ENCODE measurements at regions of chr17 and their contacts with region 1.

Region 1: DNA sequence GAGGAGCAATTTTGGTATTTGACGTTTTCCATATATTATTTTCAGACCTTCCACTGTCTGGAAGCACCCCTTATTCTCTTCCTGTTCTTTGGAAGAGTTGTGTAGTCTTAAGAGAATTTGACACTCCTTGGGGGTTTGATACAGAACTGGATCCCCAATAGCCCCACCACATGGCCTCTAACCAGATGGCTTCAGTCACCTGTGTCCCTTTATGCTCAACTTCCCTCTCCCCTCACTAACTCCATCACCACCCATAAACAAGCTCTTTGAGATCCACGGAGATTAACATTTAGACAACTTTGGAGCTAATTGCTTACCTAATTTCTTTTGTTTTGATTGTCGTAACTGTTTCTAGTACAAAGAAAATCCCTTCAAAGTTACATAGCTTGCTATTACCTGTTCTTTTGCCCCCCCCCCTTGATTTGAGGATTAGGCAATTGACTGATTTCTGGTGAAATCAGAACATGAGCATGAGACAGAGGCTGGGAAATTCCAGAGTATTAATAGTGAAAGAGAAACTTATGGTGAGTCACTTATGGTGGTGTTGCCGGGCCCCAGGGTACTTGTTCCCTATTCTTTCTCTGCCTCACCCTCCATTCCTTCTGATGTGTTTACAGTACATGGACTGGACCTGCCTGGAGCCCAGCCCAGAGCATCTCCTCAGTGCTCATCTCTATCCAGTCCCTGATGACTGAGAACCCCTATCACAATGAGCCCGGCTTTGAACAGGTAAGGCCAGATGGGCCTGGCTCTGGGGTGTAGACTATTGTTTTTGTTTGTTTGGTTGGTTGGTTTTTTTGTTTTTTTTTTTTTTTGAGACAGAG is 7.5 kb downstream of the UBE2Z start:
- DNase-seq: no peak
- H3K4me3 ChIP-seq: no peak overlapping the region
- H3K27ac ChIP-seq: peak overlapping the region; percentile 3 to 28
- H3K4me1 ChIP-seq: peaks cover 4 to 8% of the 10 kb centered on the region in 2 donors
- H3K27me3 ChIP-seq: no peaks in the 10 kb centered on the region
- CTCF ChIP-seq: no peak

Region 2: GRCh38 chr17:47990962-47991731 is 924.5 kb before region 1 on chr17:
- intact Hi-C with region 1: loop called (anchors 5 kb)
- DNase-seq: no peak
- H3K4me3 ChIP-seq: no peak overlapping the region
- H3K27ac ChIP-seq: no peak overlapping the region
- H3K4me1 ChIP-seq: peaks cover 0 to 3% of the 10 kb centered on the region in 2 donors
- H3K27me3 ChIP-seq: no peaks in the 10 kb centered on the region
- CTCF ChIP-seq: no peak

Region 3: GRCh38 chr17:48429638-48430586 is 485.8 kb before region 1 on chr17 and contains the start of gene SKAP1:
- intact Hi-C with region 1: no loop called
- DNase-seq: no peak
- H3K4me3 ChIP-seq: peak within 1 kb of the TSS; percentile 30 to 48
- H3K27ac ChIP-seq: no peak within 1 kb of the TSS
- H3K4me1 ChIP-seq: no peaks in the 10 kb centered on the region
- H3K27me3 ChIP-seq: no peaks in the 10 kb centered on the region
- CTCF ChIP-seq: no peak
- total RNA-seq, gene SKAP1: not detected

Region 4: DNA sequence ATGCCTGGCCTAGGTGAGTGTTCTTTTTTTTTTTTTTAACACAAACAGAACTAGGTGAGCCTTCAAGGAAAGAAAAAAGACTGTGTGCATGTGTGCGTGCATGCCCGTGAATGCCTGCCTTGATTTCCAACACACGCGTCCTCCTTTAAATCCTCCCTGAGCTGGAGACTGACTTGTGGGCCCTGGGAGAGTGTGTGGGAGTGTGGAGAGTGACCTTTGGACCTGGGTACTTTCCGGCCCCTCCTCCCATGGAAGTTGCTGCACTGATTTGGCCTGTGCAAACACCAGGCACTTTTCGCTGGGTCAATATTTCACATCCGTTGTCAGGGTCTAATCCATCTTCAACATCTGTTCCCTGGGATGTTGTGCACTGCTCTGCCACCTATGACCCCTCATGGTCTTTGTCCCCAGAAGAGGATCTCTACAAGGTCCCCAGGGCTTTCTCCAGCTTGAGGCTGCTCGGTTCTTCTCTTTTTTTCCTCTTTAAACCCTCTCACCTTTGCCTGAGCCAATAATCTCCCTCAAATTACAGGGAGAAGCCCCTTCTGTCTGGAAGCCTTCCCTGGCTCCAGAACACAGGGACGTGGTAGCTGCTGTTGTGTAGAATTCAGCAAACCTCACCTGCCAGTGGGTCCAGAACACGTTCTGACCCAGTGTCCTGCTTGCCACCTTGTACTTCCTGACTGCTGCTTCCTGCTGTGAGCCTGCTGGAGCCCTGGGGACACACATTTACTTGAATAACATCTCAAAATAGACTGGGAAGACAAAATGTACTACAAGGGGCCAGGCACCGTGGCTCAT is 43.9 kb before region 1 on chr17:
- intact Hi-C with region 1: no loop called
- DNase-seq: no peak
- H3K4me3 ChIP-seq: no peak overlapping the region
- H3K27ac ChIP-seq: peak overlapping the region in 1 of 2 donors; percentile 49
- H3K4me1 ChIP-seq: no peaks in the 10 kb centered on the region
- H3K27me3 ChIP-seq: no peaks in the 10 kb centered on the region
- CTCF ChIP-seq: no peak